CD4-positive, alpha-beta T cell (primary cell): ENCODE measurements at regions of chr5 and their contacts with region 1.

Region 1: DNA sequence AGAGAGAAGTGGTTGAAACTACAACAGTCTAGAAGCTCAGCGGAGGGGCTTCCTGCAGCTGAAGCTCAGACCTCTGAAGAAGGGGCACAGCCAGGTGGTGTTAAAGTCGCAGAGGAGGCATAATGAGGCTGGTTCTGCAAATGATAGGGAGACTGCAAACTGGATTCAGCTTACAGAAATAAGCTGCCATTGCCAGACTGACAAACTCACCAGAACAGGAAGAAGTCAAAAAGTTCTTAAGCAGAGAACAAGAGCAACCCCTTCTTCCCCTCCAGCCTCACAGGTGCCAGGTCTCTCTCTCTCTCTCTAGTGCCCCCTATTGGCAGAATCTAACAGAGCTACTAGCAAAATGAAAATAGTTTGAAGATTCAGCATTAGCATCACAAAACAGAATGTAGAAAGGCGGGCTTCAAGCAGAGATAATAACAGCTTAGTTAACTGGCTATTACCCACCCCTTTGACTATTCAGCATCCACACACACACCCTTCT is 76.7 kb downstream of the GRAMD2B start:
- DNase-seq: peak in 8 of 14 experiments; percentile 8 to 77 (median 36)
- ATAC-seq: peak; percentile 79
- H3K4me3 ChIP-seq: no peak overlapping the region
- H3K4me3 Mint-ChIP-seq: peak overlapping the region; percentile 11
- H3K27ac ChIP-seq: no peak overlapping the region
- H3K27ac Mint-ChIP-seq: peak overlapping the region; percentile 82
- H3K4me1 ChIP-seq: peaks cover 10% of the 10 kb centered on the region
- H3K4me1 Mint-ChIP-seq: peaks cover 45% of the 10 kb centered on the region
- H3K27me3 ChIP-seq: no peaks in the 10 kb centered on the region
- H3K27me3 Mint-ChIP-seq: no peaks in the 10 kb centered on the region
- CTCF ChIP-seq: peak; percentile 68

Region 2: DNA sequence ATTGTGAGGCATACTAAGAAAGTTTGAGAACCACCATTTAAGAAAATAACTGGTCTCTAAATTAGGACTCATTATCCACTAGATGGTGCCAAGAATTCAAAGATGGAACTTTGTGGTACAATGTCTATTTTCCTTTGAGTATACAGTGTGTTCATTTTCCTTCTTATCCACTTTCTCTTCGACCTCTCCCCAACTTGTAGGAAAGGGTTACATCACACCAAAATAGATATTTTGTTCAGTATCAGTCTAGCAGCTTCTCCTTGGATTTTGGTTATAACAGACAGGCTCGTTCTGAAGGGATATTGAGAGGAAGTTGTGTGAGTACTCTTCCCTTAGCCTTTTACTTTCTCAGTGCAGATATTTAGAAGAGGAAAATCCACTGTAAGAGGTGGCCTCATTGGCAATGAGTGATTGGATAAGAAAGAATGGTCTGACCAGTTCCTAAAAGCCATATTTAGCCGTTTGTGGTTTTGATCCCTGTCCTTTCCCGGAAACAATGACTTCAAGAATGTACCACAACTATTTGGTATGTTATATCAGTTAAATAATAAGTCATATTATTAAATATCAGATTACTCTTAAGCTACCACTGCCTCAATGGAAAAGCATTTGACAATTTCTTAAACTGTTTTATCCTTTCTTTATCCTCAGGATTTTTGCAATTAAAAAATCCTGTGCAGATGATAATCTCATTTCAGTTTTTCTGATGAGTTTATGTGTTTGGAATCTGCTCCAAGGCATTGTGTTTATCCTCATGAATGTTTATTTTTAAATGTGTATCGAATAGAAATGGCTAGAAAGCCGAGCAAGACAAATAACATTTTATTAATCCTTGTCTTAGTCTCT is 145.7 kb before region 1 on chr5:
- CTCF ChIA-PET with region 1: interaction called, 10 read pairs
- POLR2A ChIA-PET with region 1: interaction called, 3 read pairs
- intact Hi-C with region 1: loop called in 1 of 2 experiments (anchors 1 kb)
- DNase-seq: peak in 3 of 14 experiments; percentile 57 to 70 (median 68)
- ATAC-seq: peak; percentile 74
- H3K4me3 ChIP-seq: no peak overlapping the region
- H3K4me3 Mint-ChIP-seq: peak overlapping the region; percentile 13
- H3K27ac ChIP-seq: no peak overlapping the region
- H3K27ac Mint-ChIP-seq: no peak overlapping the region
- H3K4me1 ChIP-seq: peaks cover 7% of the 10 kb centered on the region
- H3K4me1 Mint-ChIP-seq: peaks cover 16% of the 10 kb centered on the region
- H3K27me3 ChIP-seq: no peaks in the 10 kb centered on the region
- H3K27me3 Mint-ChIP-seq: peaks cover 4% of the 10 kb centered on the region
- CTCF ChIP-seq: peak; percentile 78

Region 3: DNA sequence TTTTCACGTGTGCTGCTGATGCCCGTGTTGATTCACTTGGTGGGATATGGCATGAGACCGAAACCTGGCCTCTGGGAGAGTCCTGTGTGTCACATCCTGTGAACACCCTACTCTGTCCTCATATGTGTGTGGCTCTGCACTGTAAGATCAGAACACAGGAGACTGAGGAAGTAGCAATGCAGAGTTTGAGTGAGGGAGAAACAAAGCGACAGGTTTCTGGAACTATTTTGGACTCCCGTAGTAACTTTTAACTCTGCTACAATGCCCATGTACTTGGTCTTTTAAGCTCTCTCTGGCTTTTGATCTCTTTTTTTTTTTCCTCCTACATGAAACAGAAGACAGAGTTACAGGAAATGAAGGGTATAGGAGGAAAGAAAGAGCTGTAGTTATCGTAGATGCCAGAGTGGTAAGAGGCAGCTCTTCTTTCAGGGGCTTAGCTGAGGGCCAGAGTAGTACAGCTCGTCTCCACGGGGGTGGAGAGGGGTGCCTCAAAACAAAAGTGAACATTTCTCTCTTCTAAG is 50.1 kb before region 1 on chr5:
- CTCF ChIA-PET with region 1: interaction called, 4 read pairs
- POLR2A ChIA-PET with region 1: interaction called, 11 read pairs
- intact Hi-C with region 1: loop called in 1 of 2 experiments (anchors 5 kb)
- DNase-seq: peak in 13 of 14 experiments; percentile 20 to 90 (median 53)
- ATAC-seq: peak; percentile 77
- H3K4me3 ChIP-seq: peak overlapping the region; percentile 57
- H3K4me3 Mint-ChIP-seq: peak overlapping the region; percentile 91
- H3K27ac ChIP-seq: peak overlapping the region; percentile 84 to 96
- H3K27ac Mint-ChIP-seq: peak overlapping the region; percentile 97
- H3K4me1 ChIP-seq: peaks cover 53% of the 10 kb centered on the region
- H3K4me1 Mint-ChIP-seq: peaks cover 71% of the 10 kb centered on the region
- H3K27me3 ChIP-seq: no peaks in the 10 kb centered on the region
- H3K27me3 Mint-ChIP-seq: no peaks in the 10 kb centered on the region
- CTCF ChIP-seq: no peak

Region 4: GRCh38 chr5:126462239-126463014 is 37.5 kb before region 1 on chr5:
- CTCF ChIA-PET with region 1: interaction called, 3 read pairs
- POLR2A ChIA-PET with region 1: interaction called, 4 read pairs
- intact Hi-C with region 1: loop called in 1 of 2 experiments (anchors 5 kb)
- DNase-seq: no peak
- ATAC-seq: no peak
- H3K4me3 ChIP-seq: no peak overlapping the region
- H3K4me3 Mint-ChIP-seq: no peak overlapping the region
- H3K27ac ChIP-seq: no peak overlapping the region
- H3K27ac Mint-ChIP-seq: peak overlapping the region; percentile 35
- H3K4me1 ChIP-seq: no peaks in the 10 kb centered on the region
- H3K4me1 Mint-ChIP-seq: peaks cover 28% of the 10 kb centered on the region
- H3K27me3 ChIP-seq: no peaks in the 10 kb centered on the region
- H3K27me3 Mint-ChIP-seq: no peaks in the 10 kb centered on the region
- CTCF ChIP-seq: no peak

Region 5: GRCh38 chr5:126538579-126538978 is 38.7 kb after region 1 on chr5:
- CTCF ChIA-PET with region 1: interaction called, 3 read pairs
- POLR2A ChIA-PET with region 1: no interaction called
- intact Hi-C with region 1: loop called (anchors 2 kb)
- DNase-seq: no peak
- ATAC-seq: no peak
- H3K4me3 ChIP-seq: no peak overlapping the region
- H3K4me3 Mint-ChIP-seq: no peak overlapping the region
- H3K27ac ChIP-seq: no peak overlapping the region
- H3K27ac Mint-ChIP-seq: no peak overlapping the region
- H3K4me1 ChIP-seq: no peaks in the 10 kb centered on the region
- H3K4me1 Mint-ChIP-seq: peaks cover 5% of the 10 kb centered on the region
- H3K27me3 ChIP-seq: no peaks in the 10 kb centered on the region
- H3K27me3 Mint-ChIP-seq: no peaks in the 10 kb centered on the region
- CTCF ChIP-seq: no peak

Region 6: DNA sequence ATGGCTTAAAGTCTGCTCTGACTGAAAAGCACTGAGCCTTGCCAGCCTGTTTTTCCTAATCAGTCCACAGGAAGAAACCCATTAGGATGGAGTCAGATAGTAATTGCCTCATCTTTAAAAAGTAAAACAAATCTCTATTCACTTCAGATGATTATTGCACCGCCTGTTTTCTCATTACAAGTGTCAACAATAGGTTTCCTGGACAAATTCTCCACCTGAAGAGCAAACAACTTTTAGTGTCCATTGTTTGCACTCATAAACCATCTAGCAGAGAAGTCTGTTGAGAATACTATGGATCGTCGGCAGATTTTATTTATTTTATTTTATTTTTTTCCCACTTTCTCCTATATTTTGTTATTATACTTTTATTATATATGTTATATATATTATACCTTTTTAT is 553.2 kb after region 1 on chr5:
- CTCF ChIA-PET with region 1: no interaction called
- POLR2A ChIA-PET with region 1: no interaction called
- intact Hi-C with region 1: no loop called
- DNase-seq: no peak
- ATAC-seq: no peak
- H3K4me3 ChIP-seq: no peak overlapping the region
- H3K4me3 Mint-ChIP-seq: no peak overlapping the region
- H3K27ac ChIP-seq: no peak overlapping the region
- H3K27ac Mint-ChIP-seq: no peak overlapping the region
- H3K4me1 ChIP-seq: no peaks in the 10 kb centered on the region
- H3K4me1 Mint-ChIP-seq: no peaks in the 10 kb centered on the region
- H3K27me3 ChIP-seq: no peaks in the 10 kb centered on the region
- H3K27me3 Mint-ChIP-seq: no peaks in the 10 kb centered on the region
- CTCF ChIP-seq: no peak